Right ventricle myocardium inferior (tissue), 1 donor: ENCODE measurements at regions of chr14 and their contacts with region 1.

Region 1: GRCh38 chr14:91509083-91509880 is 828 bp downstream of the PPP4R3A start:
- DNase-seq: no peak
- ATAC-seq: peak; percentile 27

Region 2: GRCh38 chr14:92603309-92604242 is 1094.3 kb after region 1 on chr14:
- intact Hi-C with region 1: no loop called
- DNase-seq: no peak
- ATAC-seq: peak; percentile 89

Region 3: GRCh38 chr14:92759300-92759678 is 1250.0 kb after region 1 on chr14:
- intact Hi-C with region 1: loop called (anchors 5 kb)
- DNase-seq: no peak
- ATAC-seq: no peak